ENCODE measurements at regions of chr10 and their contacts with region 1.

Region 1: GRCh38 chr10:13414894-13415293 is 66.8 kb upstream of the SEPHS1 start:
- DNase-seq: peak in 1 of 2 experiments; percentile 42
- ATAC-seq: peak in 1 of 2 experiments; percentile 69; a peak in 3 of 6 replicates
- H3K4me3 ChIP-seq: no peak overlapping the region
- H3K27ac ChIP-seq: no peak overlapping the region
- H3K4me1 ChIP-seq: no peaks in the 10 kb centered on the region
- CTCF ChIP-seq: no peak
- EP300 ChIP-seq: no peak
- POLR2A ChIP-seq: no peak
- RAD21 ChIP-seq: 0 out of 5 replicates have a peak, but pooled peaks of 1 of the 2 experiments have one; percentile 21

Region 2: DNA sequence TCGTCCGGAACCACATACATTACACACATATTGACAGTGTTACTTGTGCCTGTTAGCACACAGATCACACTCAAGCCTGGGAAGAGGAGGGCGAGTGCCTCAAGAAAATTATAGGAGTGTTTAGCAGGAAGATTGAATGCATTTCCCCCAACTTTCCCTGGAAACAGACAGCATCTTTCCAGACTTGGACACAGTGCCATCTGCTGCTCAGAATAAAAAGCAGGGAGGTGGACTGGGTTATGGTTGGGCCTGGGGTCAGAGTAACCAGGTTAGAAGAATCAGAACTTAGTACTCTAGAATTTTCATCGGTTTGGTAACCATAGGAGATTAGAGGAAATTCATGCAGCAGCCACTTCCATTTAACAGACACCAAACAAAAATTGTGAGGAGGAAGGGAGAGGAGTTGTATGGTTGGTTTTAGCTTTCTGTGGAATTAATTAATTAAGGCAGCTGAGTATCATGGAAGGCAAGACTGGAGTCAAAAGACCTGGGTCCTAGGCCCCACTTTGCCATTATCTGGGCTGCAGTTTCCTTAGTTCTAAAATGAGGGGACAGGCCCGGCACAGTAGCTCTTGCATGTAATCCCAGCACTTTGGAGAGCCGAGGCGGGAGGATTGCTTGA is 358.3 kb before region 1 on chr10:
- CTCF ChIA-PET with region 1: no interaction called
- POLR2A ChIA-PET with region 1: interaction called, 10 read pairs
- DNase-seq: peak; percentile 23 to 43
- ATAC-seq: peak; percentile 84 to 89; a peak in 5 of 6 replicates
- H3K4me3 ChIP-seq: no peak overlapping the region
- H3K27ac ChIP-seq: no peak overlapping the region
- H3K4me1 ChIP-seq: no peaks in the 10 kb centered on the region
- CTCF ChIP-seq: peak; percentile 61
- EP300 ChIP-seq: no peak
- POLR2A ChIP-seq: no peak
- RAD21 ChIP-seq: peak; percentile 67 to 71

Region 3: DNA sequence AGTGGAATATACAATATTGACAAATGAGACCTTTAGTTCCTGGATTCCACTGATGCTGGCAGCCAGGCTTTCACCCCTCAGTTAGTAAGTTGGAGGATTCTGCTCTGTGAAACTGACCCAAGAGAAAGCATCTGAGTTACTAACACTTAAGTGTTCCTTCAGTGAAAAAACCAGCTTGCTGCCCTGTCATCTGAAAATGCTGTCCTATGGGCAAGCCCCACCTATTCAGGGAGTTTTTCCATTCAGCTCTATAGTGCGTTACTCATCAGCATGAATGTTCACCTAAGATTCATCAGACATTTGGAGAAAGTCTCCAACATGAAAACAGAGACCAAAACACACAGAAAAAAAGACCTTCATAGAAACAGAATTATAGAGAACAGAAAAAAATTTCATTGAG is 209.7 kb after region 1 on chr10:
- CTCF ChIA-PET with region 1: no interaction called
- POLR2A ChIA-PET with region 1: no interaction called
- DNase-seq: no peak
- ATAC-seq: no peak
- H3K4me3 ChIP-seq: no peak overlapping the region
- H3K27ac ChIP-seq: no peak overlapping the region
- H3K4me1 ChIP-seq: no peaks in the 10 kb centered on the region
- CTCF ChIP-seq: no peak
- EP300 ChIP-seq: no peak
- POLR2A ChIP-seq: no peak
- RAD21 ChIP-seq: no peak